Activated T-helper 1 cell treated with anti-CD3 and anti-CD28 coated beads, Interleukin-12 subunit alpha, Interleukin-12 subunit beta, Interleukin-2, Interleukin-4 antibody, amounts not matched to agents 30 ng/mL and 10 ng/mL and 1 ng/mL, durations not matched to agents 14 hours and 24 hours and 36 hours (primary cell): ENCODE measurements at regions of chr1 and their contacts with region 1.

Region 1: GRCh38 chr1:36149237-36149972 is at the start of gene TRAPPC3:
- DNase-seq: peak; percentile 99
- H3K4me3 Mint-ChIP-seq: peak within 1 kb of the TSS; percentile 92
- H3K27ac Mint-ChIP-seq: peak within 1 kb of the TSS; percentile 99
- H3K4me1 Mint-ChIP-seq: peaks cover 68% of the 10 kb centered on the region
- H3K27me3 Mint-ChIP-seq: no peaks in the 10 kb centered on the region
- total RNA-seq, gene TRAPPC3: 74.2 and 74.4 TPM in 2 replicates

Region 2: GRCh38 chr1:35287807-35288640 is 861.4 kb before region 1 on chr1:
- intact Hi-C with region 1: no loop called
- DNase-seq: no peak
- H3K4me3 Mint-ChIP-seq: no peak overlapping the region
- H3K27ac Mint-ChIP-seq: no peak overlapping the region
- H3K4me1 Mint-ChIP-seq: peaks cover 15% of the 10 kb centered on the region
- H3K27me3 Mint-ChIP-seq: no peaks in the 10 kb centered on the region

Region 3: DNA sequence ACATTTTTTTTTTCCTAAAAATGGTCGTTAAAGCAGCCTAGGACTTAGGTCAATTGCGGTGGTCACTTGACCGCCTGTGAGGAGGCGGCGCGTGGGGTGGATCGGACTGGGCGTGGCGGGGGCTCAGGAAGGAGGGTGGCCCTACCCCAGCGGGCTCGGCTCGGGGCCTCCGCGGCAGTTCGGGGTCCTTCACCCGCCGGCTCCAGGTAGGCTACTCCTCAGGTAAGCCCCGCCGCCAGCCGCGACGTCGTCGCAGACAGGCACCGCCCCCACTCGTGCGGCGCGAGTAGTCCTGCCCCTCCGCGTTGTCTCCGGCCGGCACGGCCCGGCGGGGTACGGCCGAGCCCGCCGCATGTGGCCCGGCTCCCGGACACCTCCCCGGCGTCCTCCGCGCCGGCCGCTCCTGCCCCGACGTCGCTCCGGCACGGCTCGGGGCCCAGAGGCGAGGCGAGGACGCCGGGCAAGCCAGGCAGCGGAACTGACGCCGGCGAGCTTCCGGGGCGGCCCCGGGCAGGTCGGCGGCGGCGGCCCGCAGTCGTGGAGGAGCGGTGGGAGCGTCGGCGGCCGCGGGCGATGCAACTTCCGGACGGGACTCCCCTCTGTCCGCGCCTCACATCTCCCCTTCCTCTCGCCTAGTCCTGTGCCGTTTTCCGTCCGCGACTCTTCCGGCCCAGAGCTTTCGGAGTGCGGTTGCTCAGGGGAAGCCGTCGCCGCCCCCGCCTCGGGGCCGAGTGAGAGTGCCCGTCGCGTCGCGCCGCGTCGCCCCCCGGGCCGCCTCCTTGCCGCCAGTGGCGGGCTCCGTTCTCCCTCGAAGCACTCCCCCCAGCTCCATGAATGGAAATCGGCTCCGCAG is 218.6 kb before region 1 on chr1 and contains the start of gene AGO3:
- intact Hi-C with region 1: loop called (anchors 1 kb)
- DNase-seq: peak; percentile 87
- H3K4me3 Mint-ChIP-seq: peak within 1 kb of the TSS; percentile 93
- H3K27ac Mint-ChIP-seq: peak within 1 kb of the TSS; percentile 97
- H3K4me1 Mint-ChIP-seq: peaks cover 36% of the 10 kb centered on the region
- H3K27me3 Mint-ChIP-seq: no peaks in the 10 kb centered on the region
- total RNA-seq, gene AGO3: 26.1 and 33.6 TPM in 2 replicates

Region 4: GRCh38 chr1:36187800-36188593 is 38.6 kb after region 1 on chr1:
- intact Hi-C with region 1: loop called (anchors 1 kb)
- DNase-seq: peak; percentile 76
- H3K4me3 Mint-ChIP-seq: no peak overlapping the region
- H3K27ac Mint-ChIP-seq: peak overlapping the region; percentile 88
- H3K4me1 Mint-ChIP-seq: peaks cover 6% of the 10 kb centered on the region
- H3K27me3 Mint-ChIP-seq: no peaks in the 10 kb centered on the region

Region 5: DNA sequence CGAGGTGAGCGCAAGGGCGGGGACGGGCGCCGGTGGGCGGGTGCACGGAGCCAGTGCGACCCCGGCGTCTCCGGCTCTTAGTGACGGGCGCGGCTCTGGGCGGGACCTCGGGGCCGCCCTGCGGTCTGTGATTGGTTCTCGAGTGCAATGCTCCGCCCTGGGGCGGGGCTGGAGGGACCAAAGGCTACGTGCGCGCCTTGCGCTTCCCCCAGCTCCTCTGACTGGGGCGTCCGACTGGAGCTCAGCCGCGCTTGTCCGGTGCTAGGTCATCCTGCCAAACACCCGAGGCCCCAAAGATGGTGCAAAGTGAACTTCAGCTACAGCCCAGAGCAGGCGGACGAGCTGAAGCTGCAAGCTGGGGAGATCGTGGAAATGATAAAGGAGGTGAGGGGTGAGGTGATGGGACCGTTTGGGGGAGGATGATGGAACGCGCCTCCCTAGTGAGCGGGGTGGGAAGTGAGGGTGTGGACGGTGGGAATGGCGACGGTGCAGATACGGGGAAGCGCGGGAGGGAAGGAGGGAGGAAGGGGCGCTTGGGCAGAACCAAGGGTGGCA is 157.6 kb after region 1 on chr1:
- intact Hi-C with region 1: loop called (anchors 1 kb)
- DNase-seq: peak; percentile 94
- H3K4me3 Mint-ChIP-seq: peak overlapping the region; percentile 97
- H3K27ac Mint-ChIP-seq: peak overlapping the region; percentile 89
- H3K4me1 Mint-ChIP-seq: peaks cover 39% of the 10 kb centered on the region
- H3K27me3 Mint-ChIP-seq: no peaks in the 10 kb centered on the region

Region 6: DNA sequence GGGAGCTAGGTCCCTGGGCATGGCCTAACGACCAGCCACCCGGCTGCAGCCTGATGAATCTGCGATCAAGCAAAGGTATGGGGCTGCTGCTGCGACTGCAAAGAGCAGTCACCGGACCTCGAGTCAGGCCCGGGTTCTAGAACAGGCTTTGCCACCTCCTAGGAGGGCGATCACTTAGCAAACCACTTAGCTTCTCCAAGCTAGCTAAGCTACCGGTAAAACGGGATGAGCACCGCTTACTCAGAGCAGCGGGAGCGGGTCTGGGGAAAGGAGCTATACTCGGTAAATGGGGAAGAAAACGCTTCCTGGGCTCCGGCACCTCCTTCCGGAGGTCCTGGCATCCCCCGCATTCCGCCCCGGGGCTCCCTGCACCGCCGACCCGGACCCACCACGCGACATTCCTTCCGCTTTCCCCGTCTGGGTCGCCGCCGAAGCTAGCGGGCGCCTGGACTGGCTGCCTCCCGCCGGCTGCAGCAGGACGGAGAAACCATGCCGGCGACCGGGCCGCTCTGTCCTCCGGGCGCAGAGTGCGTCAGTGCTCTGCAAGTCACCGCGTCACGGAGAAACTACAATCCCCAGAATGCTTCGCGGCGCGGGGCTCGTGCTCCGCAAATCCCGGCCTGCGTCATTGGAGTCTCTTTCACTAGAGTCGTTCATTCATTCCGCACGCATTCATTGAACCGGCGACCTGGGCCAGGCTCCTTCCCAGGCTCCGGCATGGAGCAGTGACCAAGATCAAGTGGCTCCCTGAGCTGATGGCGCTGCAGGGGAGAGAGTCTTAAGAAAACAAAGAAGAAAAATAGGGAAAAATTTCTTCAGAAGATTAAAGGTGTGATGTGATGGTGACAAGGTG is 248.2 kb after region 1 on chr1 and contains the start of gene LSM10:
- intact Hi-C with region 1: loop called (anchors 1 kb)
- DNase-seq: peak; percentile 88
- H3K4me3 Mint-ChIP-seq: peak within 1 kb of the TSS; percentile 97
- H3K27ac Mint-ChIP-seq: peak within 1 kb of the TSS; percentile 98
- H3K4me1 Mint-ChIP-seq: peaks cover 29% of the 10 kb centered on the region
- H3K27me3 Mint-ChIP-seq: no peaks in the 10 kb centered on the region
- total RNA-seq, gene LSM10: 57.5 and 63.8 TPM in 2 replicates